Caco-2 (cell line): ENCODE measurements at regions of chr6 and their contacts with region 1.

Region 1: DNA sequence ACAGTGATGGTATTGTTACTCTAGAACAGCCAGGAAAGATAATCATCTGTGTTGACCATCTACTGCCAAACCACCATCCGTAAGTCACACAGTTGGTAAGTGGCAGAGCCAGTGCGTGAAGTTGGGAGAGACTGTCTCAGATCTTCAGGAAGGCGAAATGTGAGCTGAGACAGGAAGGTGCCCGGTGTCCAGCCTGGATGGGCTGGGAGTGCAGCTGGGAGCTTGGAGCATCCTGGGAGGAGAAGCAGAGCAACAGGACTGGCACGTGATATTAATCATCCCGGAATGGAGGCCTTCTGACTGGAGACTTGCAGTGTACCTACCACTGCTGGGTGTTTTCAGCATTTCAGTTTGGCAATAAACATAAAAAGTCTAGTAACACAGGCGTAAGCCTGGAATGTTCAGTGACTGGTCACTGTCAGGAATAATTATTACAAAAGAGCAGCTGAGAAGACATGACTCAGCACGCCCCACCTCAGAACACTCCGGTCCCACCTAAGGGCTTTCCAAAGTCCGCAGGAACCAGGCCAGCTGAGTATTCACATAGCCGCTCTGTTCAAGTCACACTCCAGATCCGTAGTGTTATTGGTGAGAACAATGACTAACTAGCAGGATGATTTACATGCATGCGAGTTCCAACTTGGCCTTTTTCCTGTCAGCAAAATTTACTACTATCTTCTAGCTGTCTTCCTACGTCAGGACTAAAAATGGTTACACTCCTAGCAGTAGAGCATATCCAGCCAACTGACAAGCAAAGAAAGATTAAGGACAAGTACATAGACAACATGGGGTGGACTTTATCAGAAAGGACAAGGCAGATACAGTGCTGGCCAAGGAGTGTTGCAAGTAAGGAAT is 45.1 kb upstream of the PNRC1 start:
- DNase-seq: peak; percentile 81 to 87
- H3K4me3 ChIP-seq: 0 out of 2 replicates have a peak overlapping the region, but pooled peaks have one; percentile 6
- H3K4me3 Mint-ChIP-seq: peak overlapping the region; percentile 65
- H3K27ac Mint-ChIP-seq: peak overlapping the region; percentile 87
- H3K4me1 ChIP-seq: peaks cover 25% of the 10 kb centered on the region
- H3K4me1 Mint-ChIP-seq: peaks cover 18% of the 10 kb centered on the region
- H3K27me3 ChIP-seq: no peaks in the 10 kb centered on the region
- H3K27me3 Mint-ChIP-seq: no peaks in the 10 kb centered on the region
- CTCF ChIP-seq: no peak

Region 2: DNA sequence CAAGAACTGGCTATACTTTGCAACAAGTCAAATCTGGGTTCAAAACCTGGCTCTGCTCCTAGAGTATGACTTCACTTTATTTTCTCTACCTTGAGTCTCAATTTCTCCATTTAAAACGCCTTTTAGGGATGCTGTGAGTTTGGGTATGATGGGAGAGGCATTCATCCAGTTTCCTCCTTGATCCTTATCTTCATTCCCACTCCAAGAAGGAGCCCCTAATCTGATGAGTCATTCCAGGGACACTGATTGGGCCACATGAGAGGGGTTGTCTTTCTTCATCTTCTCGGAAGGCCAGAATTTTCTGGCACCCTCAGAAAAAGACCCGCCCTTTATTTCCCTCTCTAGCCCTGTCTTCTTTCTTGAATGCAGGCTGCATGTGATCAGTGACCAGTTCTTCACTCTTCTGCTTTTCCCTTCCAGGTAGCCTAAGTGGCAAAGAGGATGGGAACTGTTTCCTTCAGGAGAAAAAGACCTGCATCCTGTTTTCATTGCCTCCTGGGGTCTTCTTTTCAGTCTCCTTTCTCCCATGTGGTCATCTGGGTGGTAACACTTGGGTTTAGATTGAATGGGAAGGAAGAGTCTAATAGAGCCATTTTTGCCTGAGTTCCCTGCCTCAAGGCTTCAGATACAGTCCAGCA is 12.9 kb after region 1 on chr6:
- CTCF ChIA-PET with region 1: no interaction called
- POLR2A ChIA-PET with region 1: no interaction called
- intact Hi-C with region 1: loop called (anchors 1 kb)
- DNase-seq: no peak
- H3K4me3 ChIP-seq: no peak overlapping the region
- H3K4me3 Mint-ChIP-seq: no peak overlapping the region
- H3K27ac Mint-ChIP-seq: peak overlapping the region; percentile 49
- H3K4me1 ChIP-seq: peaks cover 27% of the 10 kb centered on the region
- H3K4me1 Mint-ChIP-seq: peaks cover 19% of the 10 kb centered on the region
- H3K27me3 ChIP-seq: no peaks in the 10 kb centered on the region
- H3K27me3 Mint-ChIP-seq: no peaks in the 10 kb centered on the region
- CTCF ChIP-seq: no peak

Region 3: DNA sequence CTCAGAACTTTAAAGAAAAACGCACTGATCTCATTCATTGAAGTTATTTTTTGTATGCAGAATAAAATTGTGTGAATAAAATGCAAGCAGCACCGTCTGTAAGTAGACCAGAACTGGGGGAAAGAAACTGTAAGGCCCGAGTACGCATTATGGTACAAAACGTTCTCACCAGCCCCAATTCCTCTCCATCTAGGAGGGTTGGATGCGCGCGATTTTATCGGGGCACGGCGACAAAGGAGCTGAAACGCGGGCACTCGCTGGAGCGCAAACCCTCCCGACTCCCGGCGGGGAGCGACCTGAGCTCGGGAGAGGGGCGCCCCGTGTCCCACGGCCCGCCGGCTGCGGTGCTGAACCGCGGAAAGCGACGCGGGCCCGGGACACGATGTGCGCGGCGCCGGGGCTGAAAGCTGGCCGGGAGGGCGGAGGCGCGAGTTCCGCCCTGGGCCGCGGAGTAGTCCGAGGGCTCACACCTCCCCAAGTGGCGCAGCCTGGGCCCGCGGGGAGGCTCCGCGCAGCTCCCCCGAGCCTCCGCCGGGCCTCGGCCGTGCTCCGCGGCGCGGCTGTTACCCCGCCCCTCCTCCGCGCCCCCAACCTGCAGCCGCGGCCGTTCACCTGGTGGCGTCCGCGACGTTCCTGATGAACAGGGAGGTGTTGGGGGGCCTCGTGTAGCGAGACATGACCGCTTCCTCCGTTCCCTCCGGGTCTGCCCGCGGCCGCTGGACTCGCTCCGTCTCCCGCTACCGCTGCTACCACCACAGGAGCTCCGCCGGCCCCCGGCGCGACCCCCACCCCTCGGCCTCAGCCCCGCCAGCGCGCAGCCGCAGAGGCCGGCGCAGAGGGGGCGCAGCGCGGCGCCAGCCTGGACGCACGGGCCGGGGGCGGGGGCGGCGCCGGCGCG is 82.0 kb after region 1 on chr6 and contains the start of gene SRSF12:
- CTCF ChIA-PET with region 1: no interaction called
- POLR2A ChIA-PET with region 1: no interaction called
- intact Hi-C with region 1: no loop called
- DNase-seq: peak in 1 of 2 experiments; percentile 48
- H3K4me3 ChIP-seq: peak within 1 kb of the TSS; percentile 35
- H3K4me3 Mint-ChIP-seq: peak within 1 kb of the TSS; percentile 80
- H3K27ac Mint-ChIP-seq: no peak within 1 kb of the TSS
- H3K4me1 ChIP-seq: no peaks in the 10 kb centered on the region
- H3K4me1 Mint-ChIP-seq: no peaks in the 10 kb centered on the region
- H3K27me3 ChIP-seq: no peaks in the 10 kb centered on the region
- H3K27me3 Mint-ChIP-seq: no peaks in the 10 kb centered on the region
- CTCF ChIP-seq: no peak
- total RNA-seq, gene SRSF12: 0.49 and 0.79 TPM in 2 replicates